ENCODE measurements at regions of chr5 and their contacts with region 1.

Region 1: GRCh38 chr5:9265441-9266175 is 280.3 kb downstream of the SEMA5A start:
- DNase-seq: peak; percentile 93
- H3K4me3 ChIP-seq: peak overlapping the region in 1 of 3 experiments; percentile 24
- H3K27ac ChIP-seq: peak overlapping the region; percentile 89
- H3K4me1 ChIP-seq: peaks cover 56% of the 10 kb centered on the region
- H3K27me3 ChIP-seq: no peaks in the 10 kb centered on the region
- CTCF ChIP-seq: no peak

Region 2: GRCh38 chr5:9140711-9141110 is 124.9 kb before region 1 on chr5:
- CTCF ChIA-PET with region 1: no interaction called
- dilution Hi-C with region 1: no loop called
- in situ Hi-C with region 1: no loop called
- intact Hi-C with region 1: no loop called
- DNase-seq: no peak
- H3K4me3 ChIP-seq: no peak overlapping the region
- H3K27ac ChIP-seq: no peak overlapping the region
- H3K4me1 ChIP-seq: no peaks in the 10 kb centered on the region
- H3K27me3 ChIP-seq: no peaks in the 10 kb centered on the region
- CTCF ChIP-seq: no peak

Region 3: DNA sequence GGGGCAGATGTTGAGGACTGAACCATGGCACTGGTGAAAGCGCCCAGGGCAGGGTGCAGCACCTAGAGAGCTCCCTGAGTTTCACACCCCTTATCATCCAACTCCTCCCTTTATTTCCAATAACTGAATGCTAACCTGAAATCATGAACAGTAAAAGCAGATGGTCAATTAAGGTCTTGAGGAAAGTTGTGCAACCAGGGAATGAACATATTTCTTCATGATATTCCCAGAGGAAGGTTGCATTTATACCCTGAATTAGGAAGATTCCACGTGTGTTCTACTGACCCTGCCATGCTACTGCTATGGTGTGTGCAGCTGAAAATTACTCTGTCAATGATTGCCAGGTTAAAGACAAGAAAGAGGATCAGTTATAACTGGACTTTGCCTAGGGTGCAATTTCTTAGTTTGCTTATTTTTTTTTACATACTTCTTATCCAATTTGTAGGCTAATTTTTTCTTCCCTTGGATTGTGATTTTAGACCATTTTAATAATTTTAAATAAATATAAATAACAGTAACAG is 39.5 kb before region 1 on chr5:
- CTCF ChIA-PET with region 1: no interaction called
- dilution Hi-C with region 1: no loop called
- in situ Hi-C with region 1: no loop called
- intact Hi-C with region 1: loop called (anchors 5 kb)
- DNase-seq: no peak
- H3K4me3 ChIP-seq: no peak overlapping the region
- H3K27ac ChIP-seq: no peak overlapping the region
- H3K4me1 ChIP-seq: no peaks in the 10 kb centered on the region
- H3K27me3 ChIP-seq: no peaks in the 10 kb centered on the region
- CTCF ChIP-seq: no peak

Region 4: GRCh38 chr5:9313734-9314133 is 48.1 kb after region 1 on chr5:
- CTCF ChIA-PET with region 1: no interaction called
- dilution Hi-C with region 1: no loop called
- in situ Hi-C with region 1: no loop called
- intact Hi-C with region 1: no loop called
- DNase-seq: peak; percentile 26
- H3K4me3 ChIP-seq: no peak overlapping the region
- H3K27ac ChIP-seq: no peak overlapping the region
- H3K4me1 ChIP-seq: peaks cover 8% of the 10 kb centered on the region
- H3K27me3 ChIP-seq: no peaks in the 10 kb centered on the region
- CTCF ChIP-seq: peak; percentile 51 to 54

Region 5: DNA sequence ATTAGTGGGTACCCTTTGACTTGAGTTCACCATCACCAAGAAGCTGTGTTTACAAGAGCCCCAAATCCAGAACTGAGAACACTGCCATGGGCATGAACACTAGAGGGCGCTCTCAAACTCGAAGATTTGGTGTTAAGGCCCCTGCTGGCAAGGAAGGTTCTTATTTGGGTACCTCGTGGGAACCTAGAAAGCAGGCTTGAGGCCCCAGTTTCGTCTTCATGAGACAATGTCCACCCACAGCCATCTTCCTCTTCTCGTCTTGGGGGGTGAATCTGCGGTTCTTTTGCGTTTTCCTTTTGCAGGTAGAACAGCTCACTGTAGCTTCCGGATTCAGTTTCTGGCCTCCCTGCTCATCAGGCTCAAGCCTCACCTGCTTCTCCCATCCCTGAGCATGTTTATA is 96.2 kb after region 1 on chr5:
- CTCF ChIA-PET with region 1: no interaction called
- dilution Hi-C with region 1: no loop called
- in situ Hi-C with region 1: no loop called
- intact Hi-C with region 1: loop called (anchors 5 kb)
- DNase-seq: peak; percentile 66
- H3K4me3 ChIP-seq: no peak overlapping the region
- H3K27ac ChIP-seq: no peak overlapping the region
- H3K4me1 ChIP-seq: peaks cover 11% of the 10 kb centered on the region
- H3K27me3 ChIP-seq: no peaks in the 10 kb centered on the region
- CTCF ChIP-seq: peak; percentile 85 to 92